AG04449 (cell line): ENCODE measurements at regions of chr4 and their contacts with region 1.

Region 1: GRCh38 chr4:73729534-73730165 is 10.7 kb upstream of the CXCL8 start:
- DNase-seq: peak; percentile 63
- H3K4me3 ChIP-seq: no peak overlapping the region
- CTCF ChIP-seq: peak; percentile 84

Region 2: GRCh38 chr4:73308286-73308685 is 421.4 kb before region 1 on chr4:
- CTCF ChIA-PET with region 1: no interaction called
- POLR2A ChIA-PET with region 1: no interaction called
- DNase-seq: no peak
- H3K4me3 ChIP-seq: no peak overlapping the region
- CTCF ChIP-seq: peak; percentile 38

Region 3: DNA sequence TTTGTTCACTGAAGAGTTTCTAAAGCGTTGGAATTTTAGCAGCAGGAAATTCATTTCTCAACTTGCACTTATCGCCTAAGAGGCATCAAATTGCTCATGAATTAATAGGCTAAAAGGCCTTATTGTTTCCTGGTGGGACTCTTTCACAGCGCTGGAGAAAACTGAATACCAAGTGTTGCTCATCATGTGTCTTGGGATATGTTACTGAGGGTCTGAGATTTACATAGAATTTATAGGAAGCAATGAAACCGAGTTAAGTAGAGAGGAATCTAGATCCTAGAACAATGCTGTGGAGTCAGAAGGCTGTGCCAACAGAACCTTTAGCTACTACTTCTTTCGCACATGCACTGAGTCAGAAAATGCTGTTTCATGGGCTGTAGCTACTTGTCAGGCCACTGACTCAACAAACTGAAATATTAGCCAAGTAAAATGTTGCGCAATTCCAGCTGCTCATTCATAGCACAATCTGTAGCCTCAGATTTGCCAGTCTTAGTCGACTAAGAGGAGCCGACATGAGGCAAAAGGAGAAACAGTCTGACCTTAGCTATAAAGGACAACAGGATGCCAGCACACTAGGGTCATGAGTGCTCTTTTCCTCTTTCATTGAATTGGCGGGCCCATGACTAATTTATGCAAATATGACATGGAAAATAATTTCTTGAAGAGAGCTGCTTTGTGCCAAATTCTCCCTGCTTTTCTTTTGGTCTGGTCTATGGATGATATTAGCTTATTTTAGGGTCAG is 25.2 kb before region 1 on chr4:
- CTCF ChIA-PET with region 1: interaction called, 12 read pairs
- POLR2A ChIA-PET with region 1: no interaction called
- DNase-seq: peak; percentile 98
- H3K4me3 ChIP-seq: no peak overlapping the region
- CTCF ChIP-seq: no peak

Region 4: GRCh38 chr4:73718375-73719373 is 11.0 kb before region 1 on chr4:
- CTCF ChIA-PET with region 1: interaction called, 30 read pairs
- POLR2A ChIA-PET with region 1: no interaction called
- DNase-seq: no peak
- H3K4me3 ChIP-seq: no peak overlapping the region
- CTCF ChIP-seq: no peak

Region 5: DNA sequence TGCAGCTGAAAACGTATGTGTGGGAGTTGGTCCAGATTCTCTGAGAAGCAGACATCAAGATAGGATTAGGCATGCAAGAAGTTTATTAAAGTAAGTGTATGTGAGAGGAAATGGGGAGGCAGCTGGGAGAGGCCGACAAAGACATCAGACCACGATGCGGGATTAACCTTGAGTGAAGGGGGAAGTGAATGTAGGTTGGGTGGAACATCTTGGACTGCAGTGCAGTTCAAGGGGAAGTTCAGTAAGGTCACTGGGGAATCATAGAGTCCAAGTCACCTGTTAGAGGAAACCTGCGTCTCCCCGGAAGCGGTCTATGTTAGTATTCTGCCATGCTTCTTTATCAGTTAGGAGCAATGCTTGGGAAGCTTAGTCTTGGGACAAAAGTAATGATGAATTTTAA is 32.8 kb after region 1 on chr4:
- CTCF ChIA-PET with region 1: interaction called, 12 read pairs
- POLR2A ChIA-PET with region 1: no interaction called
- DNase-seq: no peak
- H3K4me3 ChIP-seq: no peak overlapping the region
- CTCF ChIP-seq: no peak

Region 6: DNA sequence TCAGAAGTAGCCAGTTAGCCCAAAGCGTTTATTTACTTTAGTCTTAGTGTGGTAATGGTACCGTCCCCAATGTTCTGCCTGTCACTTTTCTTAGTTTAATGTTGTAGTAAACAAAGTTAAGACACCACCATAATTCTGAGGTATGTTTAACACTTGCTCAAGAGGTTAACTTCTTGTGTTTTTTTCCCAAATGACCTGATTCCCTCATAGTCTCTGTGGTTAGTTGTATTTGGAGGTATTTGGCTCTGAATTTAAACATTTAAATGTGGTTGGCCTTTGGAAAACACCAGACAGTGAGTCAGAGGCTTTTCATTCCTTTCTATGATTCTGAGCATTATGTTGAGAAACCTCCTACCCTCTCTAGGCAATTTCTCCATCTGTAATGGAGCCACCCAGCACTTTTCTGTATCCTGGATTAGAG is 187.4 kb after region 1 on chr4:
- CTCF ChIA-PET with region 1: interaction called, 34 read pairs
- POLR2A ChIA-PET with region 1: interaction called, 3 read pairs
- DNase-seq: peak; percentile 87
- H3K4me3 ChIP-seq: no peak overlapping the region
- CTCF ChIP-seq: no peak